A673 (cell line): ENCODE measurements at regions of chr19 and their contacts with region 1.

Region 1: DNA sequence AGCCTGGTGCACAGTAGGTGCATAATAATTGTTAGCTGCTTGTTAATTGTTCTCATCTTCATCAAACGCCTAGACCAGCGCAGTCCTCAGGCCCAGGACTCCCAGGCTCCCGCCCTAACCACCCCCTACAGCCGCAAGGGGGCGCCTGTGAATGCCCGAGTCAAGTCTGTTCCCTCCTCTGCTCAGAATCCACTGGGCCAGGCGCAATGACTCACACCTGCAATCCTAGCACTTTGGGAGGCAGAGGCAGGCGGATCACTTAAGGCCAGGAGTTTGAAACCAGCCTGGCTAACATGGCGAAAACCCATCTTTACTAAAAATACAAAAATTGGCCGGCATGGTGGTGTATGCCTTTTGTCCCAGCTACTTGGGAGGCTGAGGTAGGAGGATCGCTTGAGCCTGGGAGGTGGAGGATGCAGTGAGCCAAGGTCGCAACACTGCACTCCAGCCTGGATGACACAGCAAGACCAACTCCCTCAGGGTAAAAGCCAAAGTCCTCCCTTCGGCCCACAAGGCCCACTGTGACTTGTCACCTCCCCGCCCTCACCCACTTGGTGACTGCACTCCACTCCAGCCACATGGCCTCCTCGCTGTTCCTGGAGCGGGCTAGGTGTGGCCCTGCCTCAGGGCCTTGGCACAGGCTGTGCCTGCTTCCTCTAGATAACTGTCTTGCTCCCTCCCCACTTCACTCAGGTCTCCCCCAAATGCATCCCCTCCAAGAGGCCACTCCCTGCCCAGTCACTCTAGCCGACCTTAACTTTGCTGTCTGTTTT is 9.1 kb downstream of the ZNF653 start:
- DNase-seq: peak; percentile 84
- H3K4me3 ChIP-seq: no peak overlapping the region
- H3K27ac ChIP-seq: no peak overlapping the region
- H3K4me1 ChIP-seq: no peaks in the 10 kb centered on the region
- H3K27me3 ChIP-seq: no peaks in the 10 kb centered on the region
- CTCF ChIP-seq: peak; percentile 87

Region 2: GRCh38 chr19:11482384-11483050 is 14.1 kb before region 1 on chr19:
- CTCF ChIA-PET with region 1: no interaction called
- POLR2A ChIA-PET with region 1: no interaction called
- intact Hi-C with region 1: no loop called
- DNase-seq: peak; percentile 92
- H3K4me3 ChIP-seq: peak overlapping the region; percentile 44
- H3K27ac ChIP-seq: peak overlapping the region; percentile 55
- H3K4me1 ChIP-seq: peaks cover 21% of the 10 kb centered on the region
- H3K27me3 ChIP-seq: peaks cover 21% of the 10 kb centered on the region
- CTCF ChIP-seq: peak; percentile 86

Region 3: GRCh38 chr19:11535792-11536595 is 39.4 kb after region 1 on chr19:
- CTCF ChIA-PET with region 1: no interaction called
- POLR2A ChIA-PET with region 1: no interaction called
- intact Hi-C with region 1: no loop called
- DNase-seq: peak; percentile 90
- H3K4me3 ChIP-seq: peak overlapping the region; percentile 24
- H3K27ac ChIP-seq: peak overlapping the region; percentile 63
- H3K4me1 ChIP-seq: peaks cover 10% of the 10 kb centered on the region
- H3K27me3 ChIP-seq: no peaks in the 10 kb centered on the region
- CTCF ChIP-seq: peak; percentile 80

Region 4: DNA sequence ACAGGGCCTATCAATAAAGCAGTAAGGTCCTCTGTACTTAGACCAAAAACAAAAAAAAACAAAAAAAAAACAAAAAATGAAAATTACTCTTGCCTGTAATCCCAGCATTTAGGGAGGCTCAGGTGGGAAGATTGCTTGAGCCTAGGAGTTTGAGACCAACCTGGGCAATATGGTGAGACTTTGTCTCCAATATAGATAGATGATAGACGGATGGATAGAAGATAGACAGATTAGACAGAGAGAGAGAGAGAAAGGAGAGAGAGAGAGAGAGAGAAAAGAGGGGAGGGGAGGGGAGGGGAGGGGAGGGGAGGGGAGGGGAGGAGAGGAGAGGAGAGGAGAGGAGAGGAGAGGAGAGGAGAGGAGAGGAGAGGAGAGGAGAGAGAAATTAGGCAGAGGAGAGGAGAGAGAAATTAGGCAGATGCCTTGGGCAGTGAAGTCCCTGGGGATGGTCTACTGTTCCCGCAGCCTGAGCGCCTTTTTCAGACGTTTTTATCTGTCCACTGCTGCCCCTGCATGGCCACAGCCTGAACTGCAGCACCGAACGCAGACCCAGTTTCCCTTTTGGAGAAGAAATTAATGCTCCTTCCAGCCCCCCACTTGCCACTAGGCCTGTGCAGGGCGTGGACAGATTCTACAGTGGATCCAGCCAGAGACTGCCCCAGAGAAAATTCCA is 90.9 kb after region 1 on chr19:
- CTCF ChIA-PET with region 1: no interaction called
- POLR2A ChIA-PET with region 1: no interaction called
- intact Hi-C with region 1: loop called (anchors 2 kb)
- DNase-seq: peak; percentile 89
- H3K4me3 ChIP-seq: no peak overlapping the region
- H3K27ac ChIP-seq: no peak overlapping the region
- H3K4me1 ChIP-seq: no peaks in the 10 kb centered on the region
- H3K27me3 ChIP-seq: no peaks in the 10 kb centered on the region
- CTCF ChIP-seq: peak; percentile 92